PC-9 (cell line): ENCODE measurements at regions of chr2 and their contacts with region 1.

Region 1: DNA sequence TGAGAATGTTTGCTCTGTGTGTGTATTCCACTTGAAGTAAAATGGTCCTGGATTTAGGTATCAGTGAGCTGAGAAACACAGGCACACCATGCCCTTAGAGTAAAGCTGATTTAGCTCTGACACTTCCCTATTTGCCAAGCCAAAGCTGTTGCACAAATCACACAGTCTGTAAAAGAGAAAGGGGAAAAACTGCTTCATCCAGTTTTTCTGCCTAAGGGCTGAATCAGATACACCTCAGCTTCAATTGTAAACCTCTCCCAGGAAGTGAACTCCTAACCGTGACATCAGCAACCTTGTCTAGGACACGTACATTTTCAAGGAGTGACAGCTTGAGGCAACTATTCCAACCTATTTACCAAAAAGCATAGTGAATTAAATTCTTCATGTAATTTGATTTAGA is 150.4 kb downstream of the NR4A2 start:
- DNase-seq: peak; percentile 52 to 96
- H3K4me3 ChIP-seq: peak overlapping the region; percentile 29; the same call in 1 of the 2 replicates
- H3K27ac ChIP-seq: peak overlapping the region; percentile 96
- H3K4me1 ChIP-seq: peaks cover 36% of the 10 kb centered on the region
- H3K27me3 ChIP-seq: no peaks in the 10 kb centered on the region
- CTCF ChIP-seq: no peak

Region 2: DNA sequence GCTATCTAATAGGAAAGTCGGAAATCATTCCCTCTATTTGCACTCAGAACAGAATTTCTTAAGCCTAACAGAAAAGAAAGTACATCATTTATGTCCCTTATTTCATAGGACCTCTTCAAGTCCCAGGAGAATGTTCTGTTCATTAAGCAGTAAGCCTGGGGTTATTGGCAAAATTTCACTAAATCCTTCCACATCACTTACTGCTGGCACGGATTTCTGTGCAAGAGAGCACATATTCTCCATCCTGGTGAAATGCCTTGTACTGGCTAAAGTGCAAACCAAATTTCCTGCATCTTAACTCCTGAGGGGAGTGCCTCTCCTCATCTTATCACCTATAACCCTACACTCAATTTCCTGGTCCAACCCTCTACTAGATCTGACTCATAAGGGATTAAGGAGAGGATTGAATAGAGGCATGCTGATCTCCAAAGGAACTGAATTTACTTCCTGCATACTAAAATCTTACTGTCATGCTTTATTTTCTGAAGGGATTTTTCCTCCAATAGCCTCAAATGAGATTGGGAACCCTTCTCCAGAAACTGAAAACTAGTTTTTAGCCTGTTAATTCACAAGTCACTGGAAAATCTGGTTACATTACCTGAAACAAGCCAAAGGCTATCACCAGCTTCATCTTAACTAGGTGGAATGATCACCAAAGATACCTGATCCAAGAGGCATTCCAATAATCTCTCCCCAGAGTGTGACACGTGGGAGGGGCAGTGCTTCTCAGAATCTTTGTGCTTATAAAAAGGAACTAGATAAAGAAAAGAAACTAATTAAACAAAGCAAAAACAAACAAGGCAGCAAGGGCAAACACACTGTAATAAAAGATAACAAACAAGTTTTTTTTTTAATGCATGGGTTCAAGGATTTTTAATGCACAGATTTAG is 160.8 kb before region 1 on chr2:
- CTCF ChIA-PET with region 1: no interaction called
- POLR2A ChIA-PET with region 1: no interaction called
- intact Hi-C with region 1: loop called (anchors 5 kb)
- DNase-seq: peak; percentile 19 to 84
- H3K4me3 ChIP-seq: peak overlapping the region; percentile 31; the same call in 1 of the 2 replicates
- H3K27ac ChIP-seq: peak overlapping the region; percentile 77
- H3K4me1 ChIP-seq: peaks cover 24% of the 10 kb centered on the region
- H3K27me3 ChIP-seq: no peaks in the 10 kb centered on the region
- CTCF ChIP-seq: no peak